AG04450 (cell line): ENCODE measurements at regions of chr1 and their contacts with region 1.

Region 1: DNA sequence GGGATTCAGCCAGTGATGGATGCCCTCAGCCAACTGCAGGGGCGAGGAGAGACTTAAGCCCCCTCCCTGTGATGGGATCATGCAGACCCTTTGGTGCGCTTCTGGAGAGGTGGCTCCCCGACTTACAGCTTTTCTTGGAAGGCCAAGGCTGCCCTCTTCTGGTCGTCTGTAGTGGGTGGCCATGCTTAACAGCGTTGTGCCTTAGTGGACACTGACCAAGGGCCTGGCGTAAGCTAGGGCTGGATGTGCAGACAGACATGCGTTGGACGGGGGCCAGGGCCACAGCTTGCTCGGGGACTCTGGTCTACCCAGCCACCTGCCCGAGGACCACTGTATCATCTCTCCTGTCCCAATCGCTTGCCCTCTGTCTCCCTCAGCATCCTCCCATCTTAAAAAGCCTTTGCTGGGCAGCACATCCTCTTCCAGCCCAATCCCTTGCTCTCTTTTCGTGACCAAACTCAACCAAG is 5.5 kb downstream of the AZIN2 start:
- DNase-seq: peak; percentile 53
- H3K4me3 ChIP-seq: no peak overlapping the region
- H3K27ac ChIP-seq: no peak overlapping the region
- H3K27me3 ChIP-seq: no peaks in the 10 kb centered on the region
- CTCF ChIP-seq: peak; percentile 80

Region 2: DNA sequence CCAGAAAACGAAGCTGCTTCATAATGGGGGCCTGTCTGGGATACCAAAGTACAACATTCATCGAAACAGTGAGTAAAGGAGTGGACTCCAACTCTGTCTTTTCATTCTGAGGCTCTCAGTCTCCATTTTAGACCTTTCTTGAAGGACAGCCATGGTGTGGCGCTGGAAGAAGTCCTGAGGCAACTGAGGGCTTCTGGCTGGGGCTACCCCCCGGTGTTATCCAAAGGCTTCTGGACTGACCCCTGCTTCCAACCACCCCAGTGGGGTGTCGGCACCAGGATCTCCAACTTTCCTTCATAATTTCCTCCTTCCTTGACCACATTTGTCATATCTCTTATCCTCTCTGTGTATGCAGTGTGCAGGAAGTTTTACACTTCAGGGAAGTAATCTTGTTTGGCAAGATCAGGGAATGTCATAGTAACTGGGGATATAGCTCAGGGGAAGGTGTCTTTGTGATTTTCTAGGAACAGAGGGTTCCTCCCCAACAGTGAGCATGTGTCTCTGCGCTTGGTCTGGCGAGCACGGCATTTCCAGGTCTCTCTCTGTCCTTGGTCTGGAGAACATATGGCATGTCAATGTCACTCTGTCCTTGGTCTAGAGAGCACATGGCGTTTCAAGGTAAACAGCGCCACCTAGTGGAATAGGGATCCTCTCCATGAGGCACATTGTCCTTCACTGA is 672.8 kb before region 1 on chr1:
- CTCF ChIA-PET with region 1: no interaction called
- POLR2A ChIA-PET with region 1: no interaction called
- DNase-seq: no peak
- H3K4me3 ChIP-seq: no peak overlapping the region
- H3K27ac ChIP-seq: no peak overlapping the region
- H3K27me3 ChIP-seq: peaks cover 2% of the 10 kb centered on the region
- CTCF ChIP-seq: peak; percentile 83

Region 3: DNA sequence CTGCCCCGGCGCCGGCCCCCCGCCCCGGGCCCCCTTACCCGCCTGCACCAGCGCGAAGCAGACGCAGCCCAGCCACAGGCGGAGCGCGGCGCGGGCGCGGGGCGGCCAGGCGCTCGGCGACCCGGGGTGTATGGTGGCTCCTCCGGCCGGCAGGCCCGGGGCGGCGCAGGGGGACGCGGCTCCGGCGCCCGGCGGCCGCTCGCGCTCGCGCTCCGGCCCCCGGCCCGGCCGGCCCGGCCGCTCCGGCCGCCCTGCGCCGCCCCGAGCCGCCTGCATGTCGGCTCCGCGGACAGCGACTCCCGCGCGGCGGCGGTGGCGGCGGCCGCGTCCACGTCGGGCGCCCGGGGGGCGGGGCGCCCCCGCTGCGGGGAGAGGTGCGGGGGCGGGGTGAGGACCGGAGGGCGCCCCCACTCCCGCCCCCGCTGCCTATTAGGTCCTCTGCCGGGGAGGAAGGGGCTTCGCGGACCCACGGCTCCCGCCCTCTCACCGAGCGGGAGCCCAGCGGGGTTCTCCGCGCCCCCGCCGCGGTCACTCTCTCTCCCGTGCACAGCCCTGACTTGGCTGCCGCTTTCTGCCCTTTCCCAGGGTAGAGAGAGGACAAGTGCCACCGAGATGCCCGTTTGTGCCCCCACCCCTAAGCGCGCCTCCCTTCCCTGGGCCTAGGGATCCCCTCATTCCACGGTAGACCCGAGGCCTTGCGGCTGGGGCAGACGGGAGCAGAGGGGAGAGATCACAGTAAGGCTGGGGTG is 215.6 kb before region 1 on chr1 and contains the start of gene FNDC5:
- CTCF ChIA-PET with region 1: interaction called, 67 read pairs
- POLR2A ChIA-PET with region 1: no interaction called
- DNase-seq: no peak
- H3K4me3 ChIP-seq: peak within 1 kb of the TSS; percentile 46
- H3K27ac ChIP-seq: no peak within 1 kb of the TSS
- H3K27me3 ChIP-seq: peaks cover 12% of the 10 kb centered on the region
- CTCF ChIP-seq: no peak
- polyA plus RNA-seq, gene FNDC5: 1.5 and 1.9 TPM in 2 replicates

Region 4: DNA sequence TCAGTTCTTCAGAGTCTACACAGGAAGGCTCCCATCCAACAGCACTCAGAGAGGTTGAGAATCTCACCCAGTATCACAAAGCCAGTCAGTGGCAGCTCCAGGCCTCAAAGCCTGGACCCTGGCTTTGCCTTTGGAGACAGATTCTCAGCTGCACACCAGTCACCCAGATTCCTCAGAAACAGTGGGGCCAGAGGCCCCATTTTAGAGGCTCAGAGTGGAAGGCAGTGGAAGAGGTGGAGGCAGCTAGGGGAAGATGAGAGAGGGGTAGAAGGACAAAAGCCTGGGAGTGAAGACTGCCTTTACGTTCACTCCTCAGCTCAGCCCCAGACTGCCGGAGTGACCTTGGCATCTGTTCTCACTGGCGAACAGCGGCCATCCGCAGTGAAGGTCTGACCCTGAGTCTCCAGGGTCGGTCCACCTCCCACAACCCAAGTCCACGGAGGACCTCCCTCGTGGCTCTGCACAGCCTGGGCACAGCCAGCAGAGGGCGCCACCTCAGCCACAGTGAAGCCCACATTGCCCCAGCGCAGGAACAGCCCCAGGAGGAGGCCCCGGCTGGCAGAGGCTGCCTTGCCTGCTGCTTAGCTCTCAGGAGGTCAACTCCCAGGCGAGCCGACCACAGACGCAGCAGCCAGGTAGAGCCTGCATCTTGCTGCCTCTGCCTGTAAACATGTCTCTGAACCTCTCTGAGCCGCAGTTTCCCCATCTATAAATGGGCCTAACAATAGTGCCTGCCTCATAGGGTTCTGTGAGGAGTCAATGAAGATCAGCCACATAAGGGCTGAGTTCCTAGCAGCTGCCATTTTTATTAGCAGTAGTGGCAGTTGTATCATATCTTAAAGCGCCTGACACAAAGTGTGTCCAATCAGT is 209.8 kb before region 1 on chr1:
- CTCF ChIA-PET with region 1: interaction called, 67 read pairs
- POLR2A ChIA-PET with region 1: interaction called, 3 read pairs
- DNase-seq: no peak
- H3K4me3 ChIP-seq: no peak overlapping the region
- H3K27ac ChIP-seq: no peak overlapping the region
- H3K27me3 ChIP-seq: peaks cover 3% of the 10 kb centered on the region
- CTCF ChIP-seq: peak; percentile 78

Region 5: GRCh38 chr1:33025181-33025571 is 61.2 kb before region 1 on chr1:
- CTCF ChIA-PET with region 1: no interaction called
- POLR2A ChIA-PET with region 1: no interaction called
- DNase-seq: no peak
- H3K4me3 ChIP-seq: no peak overlapping the region
- H3K27ac ChIP-seq: no peak overlapping the region
- H3K27me3 ChIP-seq: no peaks in the 10 kb centered on the region
- CTCF ChIP-seq: no peak

Region 6: DNA sequence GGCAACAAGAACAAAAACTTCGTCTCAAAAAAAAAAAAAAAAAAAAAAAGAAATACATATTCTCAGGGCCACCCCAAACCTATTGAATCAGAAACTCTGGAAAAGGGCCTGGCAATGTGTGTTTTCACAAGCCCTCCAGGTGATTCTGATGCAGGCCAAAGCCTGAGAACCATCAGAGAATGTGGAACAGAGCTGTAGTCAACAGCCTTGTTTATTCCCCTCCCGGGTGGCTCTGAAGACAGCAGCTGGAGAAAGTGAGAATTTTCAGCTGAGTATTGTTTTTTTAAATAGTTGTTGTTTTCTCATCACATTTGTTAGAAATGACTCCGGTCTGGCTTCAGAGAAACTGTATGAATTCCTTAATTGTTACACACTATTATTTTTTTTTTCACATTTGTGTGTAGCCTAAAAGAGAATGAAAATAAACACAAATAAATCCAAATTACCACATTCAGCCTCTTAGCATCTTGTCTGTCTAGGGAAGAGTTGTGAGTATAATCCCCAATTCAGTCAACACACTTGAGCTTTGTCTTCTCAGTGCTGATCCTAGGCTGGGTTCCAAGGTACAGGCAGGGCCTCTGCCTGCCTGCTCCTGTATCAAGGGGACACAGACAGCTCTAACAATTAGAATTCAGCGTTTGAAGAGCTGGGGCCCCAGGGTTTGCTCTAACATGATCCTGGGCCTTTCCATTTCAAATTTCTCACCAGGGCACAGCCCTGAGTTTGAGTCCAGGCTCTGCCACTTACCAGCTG is 12.0 kb before region 1 on chr1:
- CTCF ChIA-PET with region 1: interaction called, 12 read pairs
- POLR2A ChIA-PET with region 1: interaction called, 3 read pairs
- DNase-seq: no peak
- H3K4me3 ChIP-seq: no peak overlapping the region
- H3K27ac ChIP-seq: no peak overlapping the region
- H3K27me3 ChIP-seq: peaks cover 4% of the 10 kb centered on the region
- CTCF ChIP-seq: no peak

Region 7: GRCh38 chr1:33211972-33212371 is 125.6 kb after region 1 on chr1:
- CTCF ChIA-PET with region 1: no interaction called
- POLR2A ChIA-PET with region 1: no interaction called
- DNase-seq: no peak
- H3K4me3 ChIP-seq: no peak overlapping the region
- H3K27ac ChIP-seq: no peak overlapping the region
- H3K27me3 ChIP-seq: peaks cover 8% of the 10 kb centered on the region
- CTCF ChIP-seq: no peak